ENCODE measurements at regions of chr20 and their contacts with region 1.

Region 1: GRCh38 chr20:39874049-39874888 is 814.8 kb downstream of the MAFB start:
- DNase-seq: peak; percentile 52
- CTCF ChIP-seq: peak; percentile 93

Region 2: DNA sequence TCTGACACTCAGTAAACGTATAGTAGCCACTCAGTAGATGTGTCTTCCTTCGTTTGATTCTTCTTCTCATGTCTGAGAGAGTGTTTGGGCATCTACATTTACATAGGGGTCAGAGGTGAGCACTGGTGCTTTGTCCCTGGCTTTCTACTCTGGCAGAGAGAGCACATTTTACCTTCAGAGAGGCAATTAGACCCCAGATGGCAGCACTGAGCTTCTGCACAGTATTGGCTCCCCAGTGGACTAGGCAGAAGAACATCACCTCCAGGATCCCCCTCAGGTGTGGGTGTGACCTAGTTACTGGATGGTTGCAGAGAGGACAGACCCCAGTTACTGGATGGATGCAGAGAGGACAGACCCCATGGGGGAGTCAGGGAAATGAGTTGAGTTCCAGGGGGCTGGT is 585.0 kb before region 1 on chr20:
- in situ Hi-C with region 1: loop called (anchors 25 kb)
- DNase-seq: peak; percentile 34
- CTCF ChIP-seq: peak; percentile 53

Measured in GM13977 (cell line).